Left cardiac atrium (tissue), 4 donors: ENCODE measurements at regions of chr6 and their contacts with region 1.

Region 1: DNA sequence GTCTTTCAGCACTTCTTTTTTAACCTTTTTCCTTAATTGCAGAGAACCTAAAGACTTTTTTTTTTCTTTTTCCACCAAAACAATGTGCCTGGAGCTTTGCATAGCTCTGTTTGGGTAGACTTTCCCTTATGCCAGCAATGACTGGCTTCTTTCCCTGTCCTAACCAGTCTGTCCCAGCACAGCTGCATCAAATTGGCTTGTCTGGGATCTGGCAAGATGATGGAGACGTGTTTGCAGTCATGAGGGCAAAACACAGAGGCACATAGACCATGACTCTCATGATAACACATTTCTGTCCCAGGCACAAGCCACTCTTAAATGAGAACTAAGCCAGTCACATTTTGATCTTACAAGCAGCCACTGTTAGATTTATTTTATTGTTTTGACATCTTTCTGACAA is 16.5 kb downstream of the HEY2 start:
- DNase-seq: no peak
- ATAC-seq: no peak

Region 2: DNA sequence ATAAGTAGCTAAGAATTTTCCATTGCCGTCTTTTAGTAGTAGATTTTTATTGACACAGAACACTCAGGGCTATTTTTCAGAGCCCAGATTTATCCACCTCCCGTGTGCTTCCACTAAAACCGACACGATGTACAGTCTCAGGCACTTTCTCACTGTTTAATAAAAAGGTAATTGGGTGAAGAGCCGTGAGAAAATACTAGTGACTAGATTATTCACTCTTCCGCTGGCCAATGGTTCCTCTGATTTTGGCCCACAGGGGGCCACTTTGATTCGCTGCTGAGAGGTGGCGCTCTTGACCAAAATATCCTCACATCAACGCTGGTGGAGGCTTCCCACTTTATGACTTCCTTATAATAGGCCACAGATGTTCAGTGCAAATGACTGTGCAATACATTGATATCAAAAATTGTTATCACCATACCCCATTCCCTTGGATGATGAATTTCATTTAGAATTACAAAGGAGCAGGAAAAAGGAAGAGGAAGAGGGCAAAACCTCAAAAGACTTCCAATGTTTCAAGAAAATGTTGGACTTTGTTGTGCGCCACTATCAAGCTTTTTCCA is 451.8 kb before region 1 on chr6:
- intact Hi-C with region 1: loop called (anchors 1 to 5 kb)
- DNase-seq: peak; percentile 67
- ATAC-seq: peak; percentile 91